Mucosa of descending colon (tissue), 3 donors: ENCODE measurements at regions of chr12 and their contacts with region 1.

Region 1: DNA sequence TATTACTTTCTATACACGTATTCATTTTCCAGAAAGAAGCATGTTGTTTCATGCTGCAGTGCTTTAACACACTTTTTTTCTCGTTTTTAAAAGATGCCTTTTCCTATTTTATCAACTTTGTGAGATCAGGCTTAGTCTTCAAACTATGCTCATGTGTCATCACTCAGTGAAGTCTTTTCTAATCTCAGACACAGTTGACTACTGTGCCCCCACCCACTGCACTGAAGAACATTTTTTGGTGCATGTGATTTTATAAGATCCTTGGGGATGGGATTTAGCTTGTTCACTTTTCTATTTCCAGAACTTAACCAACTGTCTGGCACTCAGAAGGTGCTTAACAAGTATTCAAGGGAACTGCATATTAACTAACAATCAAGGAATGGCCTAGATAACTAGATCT is 85.5 kb downstream of the CDK17 start:
- DNase-seq: no peak
- ATAC-seq: no peak
- H3K4me3 ChIP-seq: no peak overlapping the region
- H3K4me1 ChIP-seq: no peaks in the 10 kb centered on the region
- CTCF ChIP-seq: no peak

Region 2: DNA sequence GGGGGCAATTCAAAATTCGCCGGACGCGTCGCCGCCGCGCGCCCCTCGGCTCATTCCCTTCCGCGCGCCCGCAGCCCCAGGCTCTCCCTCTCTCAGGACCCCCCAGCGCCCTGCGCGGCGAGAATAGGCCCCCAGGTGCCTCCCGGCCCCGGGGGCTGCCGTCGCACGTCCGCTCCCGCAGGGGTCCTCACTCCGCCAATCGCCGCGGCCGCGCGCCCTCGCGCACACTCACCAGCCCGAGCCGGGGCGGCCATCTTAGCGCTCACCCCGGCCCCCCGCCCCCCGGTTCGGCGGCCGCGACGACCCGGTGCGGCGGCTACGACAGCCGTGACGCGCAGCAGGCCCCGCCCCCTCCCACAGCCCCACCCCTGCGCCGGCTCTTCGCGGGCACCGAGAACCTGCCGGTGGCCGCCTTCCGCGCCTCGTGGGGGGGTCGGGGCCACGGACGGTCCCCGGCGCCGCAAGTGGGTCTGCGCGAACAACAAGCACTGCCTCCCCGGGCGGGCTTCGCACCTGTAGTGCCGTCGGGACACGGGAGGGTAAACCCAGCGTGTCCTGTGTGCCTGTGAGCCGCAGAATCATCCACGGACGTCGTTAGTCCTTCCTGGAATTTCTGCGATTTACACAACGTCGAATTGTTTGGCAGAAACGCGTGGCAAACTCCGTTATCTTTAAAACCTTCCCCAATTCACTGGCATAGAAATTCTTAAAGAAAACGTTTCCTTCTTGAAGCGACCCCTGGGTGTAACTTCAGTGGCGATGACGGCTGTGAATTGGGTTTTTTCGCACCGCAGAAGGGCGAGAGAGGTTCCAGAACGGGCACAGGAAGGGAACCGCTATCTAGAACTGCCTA is 766.0 kb before region 1 on chr12:
- intact Hi-C with region 1: no loop called
- DNase-seq: peak; percentile 43 to 60 (median 55)
- ATAC-seq: peak; percentile 85
- H3K4me3 ChIP-seq: peak overlapping the region; percentile 24
- H3K4me1 ChIP-seq: peaks cover 8% of the 10 kb centered on the region
- CTCF ChIP-seq: no peak

Region 3: DNA sequence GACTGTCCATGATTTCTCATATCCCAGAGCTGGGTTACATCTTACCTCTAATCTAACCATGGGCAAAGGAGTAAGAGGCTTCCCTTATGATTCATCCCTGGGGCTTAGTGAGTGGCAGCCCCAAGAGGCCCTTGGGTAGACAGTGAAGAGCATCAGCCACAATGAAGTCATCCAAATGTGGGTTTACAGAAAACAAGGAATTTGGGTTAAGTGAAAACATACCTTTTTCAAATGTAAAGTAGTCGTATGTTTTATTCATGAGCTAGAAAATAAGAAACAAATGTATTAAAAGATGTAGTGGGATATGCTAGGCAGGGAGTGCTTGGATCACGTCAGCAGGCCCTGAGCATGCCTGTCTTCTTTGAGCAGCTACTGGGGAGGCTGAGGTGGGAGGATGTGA is 174.5 kb before region 1 on chr12:
- intact Hi-C with region 1: no loop called
- DNase-seq: no peak
- ATAC-seq: no peak
- H3K4me3 ChIP-seq: no peak overlapping the region
- H3K4me1 ChIP-seq: no peaks in the 10 kb centered on the region
- CTCF ChIP-seq: no peak

Region 4: GRCh38 chr12:96375841-96376604 is 61.3 kb after region 1 on chr12:
- intact Hi-C with region 1: no loop called
- DNase-seq: no peak
- ATAC-seq: peak; percentile 72
- H3K4me3 ChIP-seq: no peak overlapping the region
- H3K4me1 ChIP-seq: peaks cover 34% of the 10 kb centered on the region
- CTCF ChIP-seq: no peak

Region 5: GRCh38 chr12:96392397-96392796 is 77.7 kb after region 1 on chr12:
- intact Hi-C with region 1: loop called in 1 of 2 experiments (anchors 5 kb)
- DNase-seq: no peak
- ATAC-seq: no peak
- H3K4me3 ChIP-seq: no peak overlapping the region
- H3K4me1 ChIP-seq: peaks cover 8% of the 10 kb centered on the region
- CTCF ChIP-seq: no peak

Region 6: DNA sequence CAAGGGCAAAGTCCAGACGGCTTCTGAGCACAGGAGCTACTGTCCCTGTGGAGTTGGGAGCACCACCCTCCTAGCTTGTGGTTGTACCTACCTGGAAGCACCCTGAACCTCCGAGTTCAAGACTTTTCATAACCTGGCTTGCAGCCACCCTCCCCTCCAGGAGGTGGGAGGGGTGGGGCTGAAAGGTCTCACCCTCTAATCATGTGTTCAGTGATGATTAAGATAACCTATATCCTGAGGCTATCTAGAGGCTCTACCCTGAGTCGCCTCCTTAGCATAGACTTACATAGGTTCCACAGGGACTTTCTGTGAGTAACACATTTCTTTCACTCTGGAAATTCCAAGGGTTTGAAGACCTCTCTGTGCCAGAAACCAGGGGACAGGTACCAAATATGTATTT is 321.1 kb after region 1 on chr12:
- intact Hi-C with region 1: no loop called
- DNase-seq: no peak
- ATAC-seq: no peak
- H3K4me3 ChIP-seq: no peak overlapping the region
- H3K4me1 ChIP-seq: no peaks in the 10 kb centered on the region
- CTCF ChIP-seq: no peak